HCT116 (cell line): ENCODE measurements at regions of chr1 and their contacts with region 1.

Region 1: DNA sequence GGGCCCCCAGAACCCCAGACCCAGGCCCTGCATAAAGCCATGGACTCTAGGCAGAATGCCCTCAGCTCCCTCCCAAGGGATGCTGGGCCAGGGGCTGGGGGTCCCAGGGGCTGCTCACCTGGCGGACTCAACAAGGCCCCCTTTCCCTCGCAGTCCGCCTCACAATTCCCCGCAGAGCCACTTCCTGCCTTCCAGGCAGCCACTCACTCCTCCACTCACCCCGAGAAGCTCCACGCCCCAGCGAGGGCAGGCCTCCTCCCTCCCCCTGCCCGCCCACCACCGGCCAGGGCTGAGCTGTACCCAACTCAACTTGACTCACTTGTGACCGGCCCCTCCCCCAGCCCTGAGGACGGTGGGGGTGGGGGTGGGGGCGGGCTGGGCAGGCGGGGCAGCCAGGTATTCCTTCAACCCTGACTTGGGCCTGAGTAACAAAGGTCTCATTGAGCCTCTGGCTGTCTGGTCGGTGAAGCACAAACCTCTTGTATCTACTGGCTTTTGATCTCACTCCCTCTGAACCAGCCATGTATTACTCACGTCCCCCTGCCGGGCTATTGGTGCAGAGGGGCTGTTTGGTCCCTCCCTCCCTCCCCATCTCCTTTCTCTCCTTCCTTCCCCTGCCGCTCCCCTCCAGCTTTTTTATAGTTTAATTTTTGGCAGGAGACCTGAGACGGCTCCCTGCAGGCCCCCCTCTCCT is 5.9 kb downstream of the BLACAT1 start:
- DNase-seq: peak; percentile 95
- ATAC-seq: peak; percentile 84
- H3K4me3 ChIP-seq: peak overlapping the region; percentile 77 to 82
- H3K27ac ChIP-seq: peak overlapping the region; percentile 95
- H3K4me1 ChIP-seq: peaks cover 50 to 94% of the 10 kb centered on the region in 2 experiments
- H3K27me3 ChIP-seq: 0 out of 2 replicates have a peak, but pooled peaks cover 3% of the 10 kb centered on the region
- CTCF ChIP-seq: no peak
- POLR2A ChIP-seq: no peak
- RAD21 ChIP-seq: no peak

Region 2: DNA sequence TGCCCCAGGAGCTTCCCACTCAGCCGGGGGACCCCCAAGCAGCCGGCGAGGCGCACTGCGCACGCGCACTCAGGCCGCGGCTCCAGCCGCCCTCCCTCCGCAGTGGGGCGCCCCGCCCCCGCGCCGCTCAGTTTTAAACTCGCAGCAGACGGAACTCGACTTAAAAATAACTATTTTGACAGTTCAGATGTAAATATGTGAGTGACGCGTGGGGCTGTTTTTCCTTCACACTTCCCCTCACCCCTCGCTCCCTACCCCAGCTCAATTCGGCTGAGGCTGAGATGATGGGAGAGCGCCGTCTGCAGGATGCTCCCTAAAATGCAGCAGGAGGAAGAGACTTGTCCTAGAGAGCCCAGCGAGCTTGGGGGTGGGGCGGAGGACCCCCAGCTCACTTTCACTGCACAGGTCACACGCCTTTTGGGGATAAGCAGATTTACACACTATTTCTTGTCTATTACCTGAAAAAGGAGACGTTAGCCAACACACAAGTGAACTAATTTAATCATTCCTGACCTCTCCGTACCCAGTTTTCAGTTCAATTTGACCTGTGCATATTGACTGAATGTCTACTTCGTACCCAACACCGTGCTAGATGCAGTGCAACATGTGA is 19.1 kb before region 1 on chr1:
- CTCF ChIA-PET with region 1: interaction called, 10 read pairs
- POLR2A ChIA-PET with region 1: no interaction called
- RAD21 ChIA-PET with region 1: no interaction called
- intact Hi-C with region 1: no loop called
- DNase-seq: no peak
- ATAC-seq: peak; percentile 81
- H3K4me3 ChIP-seq: peak overlapping the region; percentile 24 to 47
- H3K27ac ChIP-seq: no peak overlapping the region
- H3K4me1 ChIP-seq: peaks cover 0 to 16% of the 10 kb centered on the region in 2 experiments; a peak in 1 of 4 replicates
- H3K27me3 ChIP-seq: no peaks in the 10 kb centered on the region
- CTCF ChIP-seq: peak; percentile 75 to 85 (median 84); a peak in 5 of 6 replicates
- POLR2A ChIP-seq: no peak
- RAD21 ChIP-seq: peak; percentile 61

Region 3: DNA sequence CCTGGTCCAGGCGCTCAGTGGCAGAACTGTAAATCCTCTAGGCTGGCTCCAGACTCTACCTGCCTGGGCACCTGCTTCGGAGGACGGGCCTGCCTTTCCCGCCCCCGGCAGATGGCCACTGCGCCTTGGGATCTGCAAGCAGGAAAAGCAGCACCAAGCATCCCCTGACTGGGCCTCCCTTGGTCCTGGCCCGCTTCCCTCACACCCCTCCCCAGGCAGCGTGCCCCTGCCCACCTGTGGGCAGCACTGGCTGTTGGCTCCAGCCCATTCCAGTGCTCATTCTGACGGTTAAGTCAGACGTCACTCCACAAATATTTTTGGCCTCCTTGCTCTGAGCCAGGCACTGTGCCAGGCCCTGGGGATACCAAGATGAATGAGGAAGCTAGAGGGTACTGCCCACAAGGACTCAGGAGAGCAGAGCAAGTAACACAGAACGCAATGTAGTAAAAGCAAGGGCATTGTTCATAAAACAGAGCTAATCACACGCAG is 27.9 kb after region 1 on chr1:
- CTCF ChIA-PET with region 1: interaction called, 4 read pairs
- POLR2A ChIA-PET with region 1: interaction called, 10 read pairs
- RAD21 ChIA-PET with region 1: no interaction called
- intact Hi-C with region 1: no loop called
- DNase-seq: peak; percentile 59
- ATAC-seq: peak; percentile 70
- H3K4me3 ChIP-seq: no peak overlapping the region; a peak in 1 of 4 replicates
- H3K27ac ChIP-seq: 0 out of 2 replicates have a peak overlapping the region, but pooled peaks have one; percentile 9
- H3K4me1 ChIP-seq: peaks cover 10 to 15% of the 10 kb centered on the region in 2 experiments
- H3K27me3 ChIP-seq: peaks cover 2% of the 10 kb centered on the region; the same call in 1 of the 2 replicates
- CTCF ChIP-seq: no peak
- POLR2A ChIP-seq: no peak
- RAD21 ChIP-seq: no peak